WTC11 (cell line): ENCODE measurements at regions of chr1 and their contacts with region 1.

Region 1: GRCh38 chr1:3491291-3492246 is 37.1 kb downstream of the ARHGEF16 start:
- DNase-seq: peak; percentile 87
- ATAC-seq: peak; percentile 85
- H3K4me3 Mint-ChIP-seq: peak overlapping the region; percentile 67
- H3K27ac Mint-ChIP-seq: no peak overlapping the region
- H3K4me1 Mint-ChIP-seq: peaks cover 2% of the 10 kb centered on the region; the same call in 1 of the 2 replicates
- H3K27me3 Mint-ChIP-seq: no peaks in the 10 kb centered on the region; the same call in none of the 2 replicates
- CTCF ChIP-seq: peak; percentile 100

Region 2: GRCh38 chr1:3133686-3134085 is 357.9 kb before region 1 on chr1:
- CTCF ChIA-PET with region 1: no interaction called
- POLR2A ChIA-PET with region 1: no interaction called
- DNase-seq: no peak
- ATAC-seq: no peak
- H3K4me3 Mint-ChIP-seq: no peak overlapping the region
- H3K27ac Mint-ChIP-seq: no peak overlapping the region
- H3K4me1 Mint-ChIP-seq: no peaks in the 10 kb centered on the region
- H3K27me3 Mint-ChIP-seq: no peaks in the 10 kb centered on the region
- CTCF ChIP-seq: no peak

Region 3: GRCh38 chr1:3441410-3441847 is 50.1 kb before region 1 on chr1:
- CTCF ChIA-PET with region 1: interaction called, 20 read pairs
- POLR2A ChIA-PET with region 1: no interaction called
- DNase-seq: no peak
- ATAC-seq: no peak
- H3K4me3 Mint-ChIP-seq: no peak overlapping the region
- H3K27ac Mint-ChIP-seq: peak overlapping the region; percentile 53; the same call in 1 of the 2 replicates
- H3K4me1 Mint-ChIP-seq: no peaks in the 10 kb centered on the region
- H3K27me3 Mint-ChIP-seq: no peaks in the 10 kb centered on the region
- CTCF ChIP-seq: no peak

Region 4: DNA sequence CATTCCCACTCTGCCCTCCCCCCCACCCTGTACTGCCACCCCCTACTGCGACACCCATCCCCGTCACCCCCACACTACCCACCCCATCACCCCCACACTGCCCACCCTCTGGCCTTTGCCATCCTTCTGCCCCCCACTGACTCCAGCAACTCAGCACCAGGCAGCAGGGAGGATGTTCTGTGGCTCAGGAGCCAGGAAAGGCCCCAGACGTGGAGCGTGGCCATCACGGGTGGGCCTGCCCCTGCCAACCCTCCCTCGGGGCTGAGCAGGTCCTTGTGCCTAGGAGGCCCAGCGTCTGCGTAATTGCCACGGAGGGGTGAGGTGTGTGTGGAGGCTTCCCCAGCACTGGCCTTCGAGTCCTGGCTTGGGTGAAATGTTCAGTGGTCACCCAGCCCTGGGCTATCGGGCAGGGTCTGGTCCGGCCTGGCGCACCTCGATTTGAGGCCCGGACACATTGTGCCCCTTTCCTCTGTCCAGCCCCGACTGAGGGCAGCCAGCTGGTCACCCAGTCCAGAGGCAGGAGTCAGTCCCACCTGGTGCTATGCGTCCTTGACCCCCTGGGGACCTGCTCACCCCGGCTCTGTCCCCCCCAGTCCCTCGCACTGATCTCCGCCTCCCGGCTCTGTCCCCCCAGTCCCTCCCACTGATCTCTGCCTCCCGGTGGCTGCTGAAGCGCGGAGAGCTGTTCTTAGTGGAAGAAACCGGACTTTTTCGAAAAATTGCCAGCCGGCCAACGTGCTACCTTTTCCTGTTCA is 14.2 kb before region 1 on chr1:
- CTCF ChIA-PET with region 1: interaction called, 43 read pairs
- POLR2A ChIA-PET with region 1: no interaction called
- DNase-seq: no peak
- ATAC-seq: no peak
- H3K4me3 Mint-ChIP-seq: no peak overlapping the region
- H3K27ac Mint-ChIP-seq: no peak overlapping the region
- H3K4me1 Mint-ChIP-seq: no peaks in the 10 kb centered on the region
- H3K27me3 Mint-ChIP-seq: no peaks in the 10 kb centered on the region
- CTCF ChIP-seq: no peak

Region 5: GRCh38 chr1:3530926-3531818 is 39.6 kb after region 1 on chr1:
- CTCF ChIA-PET with region 1: interaction called, 36 read pairs
- POLR2A ChIA-PET with region 1: interaction called, 3 read pairs
- DNase-seq: peak; percentile 88
- ATAC-seq: peak; percentile 89
- H3K4me3 Mint-ChIP-seq: peak overlapping the region; percentile 88
- H3K27ac Mint-ChIP-seq: peak overlapping the region; percentile 99
- H3K4me1 Mint-ChIP-seq: peaks cover 10% of the 10 kb centered on the region
- H3K27me3 Mint-ChIP-seq: peaks cover 24% of the 10 kb centered on the region
- CTCF ChIP-seq: no peak

Region 6: GRCh38 chr1:3577300-3577699 is 85.7 kb after region 1 on chr1:
- CTCF ChIA-PET with region 1: interaction called, 11 read pairs
- POLR2A ChIA-PET with region 1: no interaction called
- DNase-seq: no peak
- ATAC-seq: no peak
- H3K4me3 Mint-ChIP-seq: no peak overlapping the region
- H3K27ac Mint-ChIP-seq: no peak overlapping the region
- H3K4me1 Mint-ChIP-seq: no peaks in the 10 kb centered on the region
- H3K27me3 Mint-ChIP-seq: no peaks in the 10 kb centered on the region
- CTCF ChIP-seq: no peak

Region 7: DNA sequence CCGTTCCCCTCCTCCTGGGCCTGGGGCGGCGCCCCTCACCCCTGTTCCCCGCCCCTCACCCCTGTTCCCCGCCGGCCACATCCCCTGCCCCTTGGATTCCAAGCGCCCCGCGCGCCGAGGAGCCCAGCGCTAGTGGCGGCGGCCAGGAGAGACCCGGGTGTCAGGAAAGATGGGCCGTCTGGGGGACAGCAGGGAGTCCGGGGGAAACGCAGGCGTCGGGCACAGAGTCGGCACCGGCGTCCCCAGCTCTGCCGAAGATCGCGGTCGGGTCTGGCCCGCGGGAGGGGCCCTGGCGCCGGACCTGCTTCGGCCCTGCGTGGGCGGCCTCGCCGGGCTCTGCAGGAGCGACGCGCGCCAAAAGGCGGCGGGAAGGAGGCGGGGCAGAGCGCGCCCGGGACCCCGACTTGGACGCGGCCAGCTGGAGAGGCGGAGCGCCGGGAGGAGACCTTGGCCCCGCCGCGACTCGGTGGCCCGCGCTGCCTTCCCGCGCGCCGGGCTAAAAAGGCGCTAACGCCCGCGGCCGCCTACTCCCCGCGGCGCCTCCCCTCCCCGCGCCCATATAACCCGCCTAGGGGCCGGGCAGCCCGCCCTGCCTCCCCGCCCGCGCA is 160.5 kb after region 1 on chr1 and contains the start of gene TP73:
- CTCF ChIA-PET with region 1: interaction called, 13 read pairs
- POLR2A ChIA-PET with region 1: no interaction called
- DNase-seq: peak; percentile 29
- ATAC-seq: no peak
- H3K4me3 Mint-ChIP-seq: peak within 1 kb of the TSS; percentile 82
- H3K27ac Mint-ChIP-seq: no peak within 1 kb of the TSS
- H3K4me1 Mint-ChIP-seq: peaks cover 10% of the 10 kb centered on the region
- H3K27me3 Mint-ChIP-seq: peaks cover 64% of the 10 kb centered on the region
- CTCF ChIP-seq: no peak
- total RNA-seq, gene TP73: 5.7 to 6.4 TPM (median 5.8 TPM) in 3 replicates